ENCODE measurements at regions of chr14 and their contacts with region 1.

Region 1: DNA sequence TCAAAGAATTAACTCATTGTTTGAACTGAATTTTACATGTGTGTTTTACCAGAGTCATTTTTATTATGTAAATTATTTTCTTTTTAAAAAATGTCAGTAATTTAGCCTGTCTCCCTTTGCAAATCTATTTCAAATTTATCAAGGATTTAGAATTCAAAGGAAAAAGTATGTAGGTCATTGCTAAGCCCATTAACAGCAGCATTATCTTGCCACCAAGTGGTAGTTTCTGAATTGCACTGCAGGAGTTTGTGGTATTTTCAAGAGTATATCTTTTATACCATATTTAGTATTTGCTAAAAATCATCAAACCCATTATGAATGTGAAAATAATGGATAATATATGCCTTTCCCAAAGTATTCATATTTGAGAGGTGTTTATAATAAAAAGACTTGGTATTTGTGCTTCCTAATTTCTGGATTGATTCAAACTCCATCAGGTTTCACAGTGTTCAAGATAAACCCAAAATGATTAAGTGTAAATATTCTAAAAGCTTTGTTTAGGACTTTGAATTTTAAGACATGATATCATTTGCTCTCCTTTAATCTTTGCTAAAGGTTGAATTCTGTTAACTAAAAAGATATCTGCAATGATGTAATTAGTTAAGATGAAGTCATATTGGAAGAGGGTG is 711.4 kb downstream of the FSCB start:
- DNase-seq: peak; percentile 53
- H3K4me3 ChIP-seq: no peak overlapping the region
- H3K27ac ChIP-seq: no peak overlapping the region
- H3K4me1 ChIP-seq: peaks cover 14% of the 10 kb centered on the region
- H3K27me3 ChIP-seq: no peaks in the 10 kb centered on the region
- CTCF ChIP-seq: peak; percentile 69

Region 2: GRCh38 chr14:41925409-41925808 is 1870.3 kb before region 1 on chr14:
- CTCF ChIA-PET with region 1: no interaction called
- POLR2A ChIA-PET with region 1: no interaction called
- intact Hi-C with region 1: loop called (anchors 10 kb)
- DNase-seq: peak; percentile 80
- H3K4me3 ChIP-seq: no peak overlapping the region
- H3K27ac ChIP-seq: no peak overlapping the region
- H3K4me1 ChIP-seq: peaks cover 9% of the 10 kb centered on the region
- H3K27me3 ChIP-seq: no peaks in the 10 kb centered on the region
- CTCF ChIP-seq: peak; percentile 73

Region 3: GRCh38 chr14:42110166-42110723 is 1685.5 kb before region 1 on chr14:
- CTCF ChIA-PET with region 1: no interaction called
- POLR2A ChIA-PET with region 1: no interaction called
- intact Hi-C with region 1: loop called (anchors 10 kb)
- DNase-seq: peak; percentile 74
- H3K4me3 ChIP-seq: no peak overlapping the region
- H3K27ac ChIP-seq: no peak overlapping the region
- H3K4me1 ChIP-seq: no peaks in the 10 kb centered on the region
- H3K27me3 ChIP-seq: no peaks in the 10 kb centered on the region
- CTCF ChIP-seq: peak; percentile 73

Region 4: DNA sequence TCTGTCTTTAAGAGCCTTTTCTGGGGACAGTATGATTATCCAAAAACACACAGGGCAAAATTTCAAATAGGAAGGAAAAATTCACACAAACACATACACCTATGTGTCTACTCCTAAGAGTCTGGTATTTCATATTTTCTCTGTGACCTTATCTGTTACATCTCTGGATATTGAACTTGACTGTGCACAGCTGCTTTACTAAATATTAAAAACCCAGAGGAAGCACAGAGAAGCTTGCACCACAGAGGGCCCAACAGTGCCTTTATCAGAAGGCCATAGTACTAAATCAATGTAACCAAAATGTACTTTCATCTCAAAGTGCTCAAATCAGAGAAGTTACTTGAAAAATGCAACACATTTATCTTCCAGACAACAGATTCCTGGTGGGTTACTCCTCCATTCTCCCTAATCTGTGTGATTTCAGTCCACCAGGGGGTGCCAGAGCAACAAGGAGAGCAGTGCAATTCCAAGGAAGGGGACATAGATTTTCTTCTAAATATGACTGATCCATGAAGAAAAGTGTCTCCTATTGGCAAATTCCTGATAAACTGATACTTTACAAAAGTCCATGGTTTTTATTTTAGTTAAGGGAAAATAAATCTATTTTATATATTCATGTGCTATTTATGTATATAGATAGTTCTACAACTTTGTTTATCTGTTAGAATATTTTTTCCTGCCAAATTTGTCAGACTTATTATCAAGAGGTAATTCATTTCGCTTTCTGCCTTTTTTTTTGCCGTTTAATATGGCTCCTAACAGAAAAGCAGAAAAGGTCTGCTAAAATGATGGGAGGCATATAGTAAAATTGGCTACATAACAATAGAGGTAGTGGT is 1571.4 kb before region 1 on chr14:
- CTCF ChIA-PET with region 1: no interaction called
- POLR2A ChIA-PET with region 1: no interaction called
- intact Hi-C with region 1: loop called (anchors 10 kb)
- DNase-seq: peak; percentile 87
- H3K4me3 ChIP-seq: no peak overlapping the region
- H3K27ac ChIP-seq: no peak overlapping the region
- H3K4me1 ChIP-seq: peaks cover 13% of the 10 kb centered on the region
- H3K27me3 ChIP-seq: no peaks in the 10 kb centered on the region
- CTCF ChIP-seq: peak; percentile 93

Region 5: GRCh38 chr14:43503590-43503907 is 292.2 kb before region 1 on chr14:
- CTCF ChIA-PET with region 1: no interaction called
- POLR2A ChIA-PET with region 1: no interaction called
- intact Hi-C with region 1: loop called (anchors 5 kb)
- DNase-seq: peak; percentile 66
- H3K4me3 ChIP-seq: no peak overlapping the region
- H3K27ac ChIP-seq: no peak overlapping the region
- H3K4me1 ChIP-seq: peaks cover 8% of the 10 kb centered on the region
- H3K27me3 ChIP-seq: no peaks in the 10 kb centered on the region
- CTCF ChIP-seq: peak; percentile 58

Measured in A673 (cell line).